ENCODE measurements at regions of chr7 and their contacts with region 1.

Region 1: GRCh38 chr7:151448261-151449252 is 8.6 kb upstream of the CRYGN start:
- DNase-seq: peak; percentile 63 to 90 (median 81)
- ATAC-seq: peak; percentile 90
- H3K4me3 ChIP-seq: peak overlapping the region; percentile 53 to 74
- H3K4me3 Mint-ChIP-seq: peak overlapping the region; percentile 86
- H3K27ac ChIP-seq: peak overlapping the region; percentile 16 to 40
- H3K27ac Mint-ChIP-seq: peak overlapping the region; percentile 85
- H3K4me1 ChIP-seq: peaks cover 3% of the 10 kb centered on the region
- H3K4me1 Mint-ChIP-seq: peaks cover 8% of the 10 kb centered on the region
- H3K27me3 ChIP-seq: no peaks in the 10 kb centered on the region
- H3K27me3 Mint-ChIP-seq: peaks cover 7% of the 10 kb centered on the region
- CTCF ChIP-seq: peak; percentile 65

Region 2: DNA sequence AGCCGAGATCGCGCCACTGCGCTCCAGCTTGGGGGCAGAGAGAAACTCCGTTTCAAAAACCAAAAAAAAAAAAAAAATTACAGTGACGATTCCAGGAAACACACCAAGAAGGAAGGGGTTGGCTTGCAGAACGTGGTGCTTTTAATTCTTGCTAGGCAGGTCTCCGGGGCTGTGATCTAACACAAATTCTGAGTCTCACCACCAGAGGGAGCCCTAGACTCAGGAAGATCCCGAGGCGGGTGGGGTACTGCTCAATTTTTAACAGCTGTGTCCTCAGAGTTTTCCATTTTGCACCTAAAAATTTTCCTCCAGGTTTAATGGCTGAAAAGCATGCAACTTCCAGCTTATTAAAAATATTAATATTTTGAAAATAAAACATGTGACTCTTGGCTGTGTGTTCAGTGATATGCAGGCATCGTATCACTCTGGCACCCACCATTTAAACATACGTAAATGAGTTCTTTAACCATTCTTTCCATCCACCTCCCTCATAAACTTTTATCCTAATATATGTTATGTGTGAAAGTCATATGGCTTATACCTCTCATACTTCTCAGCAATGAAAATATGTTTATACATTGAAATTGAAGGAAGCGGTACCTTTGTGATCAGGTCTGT is 133.4 kb before region 1 on chr7:
- CTCF ChIA-PET with region 1: interaction called, 63 read pairs
- POLR2A ChIA-PET with region 1: interaction called, 6 read pairs
- intact Hi-C with region 1: loop called (anchors 1 kb)
- DNase-seq: peak; percentile 63 to 89 (median 82)
- ATAC-seq: peak; percentile 95
- H3K4me3 ChIP-seq: no peak overlapping the region
- H3K4me3 Mint-ChIP-seq: no peak overlapping the region
- H3K27ac ChIP-seq: no peak overlapping the region
- H3K27ac Mint-ChIP-seq: no peak overlapping the region
- H3K4me1 ChIP-seq: peaks cover 4% of the 10 kb centered on the region
- H3K4me1 Mint-ChIP-seq: peaks cover 6% of the 10 kb centered on the region
- H3K27me3 ChIP-seq: peaks cover 0 to 4% of the 10 kb centered on the region in 2 experiments
- H3K27me3 Mint-ChIP-seq: no peaks in the 10 kb centered on the region
- CTCF ChIP-seq: peak; percentile 88

Region 3: DNA sequence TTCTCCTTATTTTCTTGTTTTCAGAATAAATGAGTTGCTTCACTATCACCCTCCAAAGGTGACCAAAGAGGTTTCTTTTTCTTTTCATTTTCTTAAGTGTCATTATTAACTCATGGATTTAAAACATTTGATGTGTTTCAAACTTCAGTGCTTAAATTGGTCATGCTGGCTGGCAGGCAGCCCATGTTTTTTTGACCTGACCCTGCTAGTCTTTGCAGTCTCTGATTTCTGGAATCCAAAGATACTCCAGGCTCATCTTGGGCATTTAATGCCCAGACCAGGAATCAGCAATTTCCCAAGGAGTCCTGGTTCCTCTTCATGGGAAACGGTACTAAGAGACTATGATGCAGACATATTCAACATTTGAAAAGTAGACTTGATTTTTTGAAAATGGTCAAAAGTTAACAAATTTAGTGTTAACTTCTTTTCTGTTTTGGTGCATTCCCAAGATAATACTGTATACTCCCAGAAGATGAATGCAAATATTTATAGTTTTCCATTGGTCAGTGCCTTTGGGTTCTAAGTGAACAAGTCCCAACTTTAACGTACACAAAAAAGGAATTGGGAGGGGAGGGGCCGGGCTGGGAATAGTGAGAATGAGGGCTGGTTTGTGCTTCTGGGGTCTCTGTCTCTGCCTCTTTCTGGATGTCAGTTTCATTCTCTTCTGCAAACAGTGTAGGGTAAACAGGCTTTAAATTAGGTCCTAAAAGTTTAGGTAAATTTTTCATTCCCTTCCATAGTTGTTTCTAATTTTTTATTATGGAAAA is 87.2 kb before region 1 on chr7:
- CTCF ChIA-PET with region 1: interaction called, 248 read pairs
- POLR2A ChIA-PET with region 1: interaction called, 6 read pairs
- intact Hi-C with region 1: no loop called
- DNase-seq: no peak
- ATAC-seq: no peak
- H3K4me3 ChIP-seq: no peak overlapping the region
- H3K4me3 Mint-ChIP-seq: no peak overlapping the region
- H3K27ac ChIP-seq: no peak overlapping the region
- H3K27ac Mint-ChIP-seq: no peak overlapping the region
- H3K4me1 ChIP-seq: no peaks in the 10 kb centered on the region
- H3K4me1 Mint-ChIP-seq: peaks cover 5% of the 10 kb centered on the region
- H3K27me3 ChIP-seq: no peaks in the 10 kb centered on the region
- H3K27me3 Mint-ChIP-seq: no peaks in the 10 kb centered on the region
- CTCF ChIP-seq: no peak

Region 4: GRCh38 chr7:151381348-151382078 is 67.0 kb before region 1 on chr7:
- CTCF ChIA-PET with region 1: interaction called, 26 read pairs
- POLR2A ChIA-PET with region 1: no interaction called
- intact Hi-C with region 1: loop called in 1 of 2 experiments (anchors 1 kb)
- DNase-seq: peak; percentile 15 to 86 (median 64)
- ATAC-seq: peak; percentile 85
- H3K4me3 ChIP-seq: peak overlapping the region; percentile 40 to 54
- H3K4me3 Mint-ChIP-seq: peak overlapping the region; percentile 78
- H3K27ac ChIP-seq: peak overlapping the region in 1 of 2 experiments; percentile 22
- H3K27ac Mint-ChIP-seq: peak overlapping the region; percentile 18
- H3K4me1 ChIP-seq: peaks cover 19% of the 10 kb centered on the region
- H3K4me1 Mint-ChIP-seq: peaks cover 12% of the 10 kb centered on the region
- H3K27me3 ChIP-seq: peaks cover 6 to 7% of the 10 kb centered on the region in 2 experiments
- H3K27me3 Mint-ChIP-seq: peaks cover 7% of the 10 kb centered on the region
- CTCF ChIP-seq: no peak

Region 5: DNA sequence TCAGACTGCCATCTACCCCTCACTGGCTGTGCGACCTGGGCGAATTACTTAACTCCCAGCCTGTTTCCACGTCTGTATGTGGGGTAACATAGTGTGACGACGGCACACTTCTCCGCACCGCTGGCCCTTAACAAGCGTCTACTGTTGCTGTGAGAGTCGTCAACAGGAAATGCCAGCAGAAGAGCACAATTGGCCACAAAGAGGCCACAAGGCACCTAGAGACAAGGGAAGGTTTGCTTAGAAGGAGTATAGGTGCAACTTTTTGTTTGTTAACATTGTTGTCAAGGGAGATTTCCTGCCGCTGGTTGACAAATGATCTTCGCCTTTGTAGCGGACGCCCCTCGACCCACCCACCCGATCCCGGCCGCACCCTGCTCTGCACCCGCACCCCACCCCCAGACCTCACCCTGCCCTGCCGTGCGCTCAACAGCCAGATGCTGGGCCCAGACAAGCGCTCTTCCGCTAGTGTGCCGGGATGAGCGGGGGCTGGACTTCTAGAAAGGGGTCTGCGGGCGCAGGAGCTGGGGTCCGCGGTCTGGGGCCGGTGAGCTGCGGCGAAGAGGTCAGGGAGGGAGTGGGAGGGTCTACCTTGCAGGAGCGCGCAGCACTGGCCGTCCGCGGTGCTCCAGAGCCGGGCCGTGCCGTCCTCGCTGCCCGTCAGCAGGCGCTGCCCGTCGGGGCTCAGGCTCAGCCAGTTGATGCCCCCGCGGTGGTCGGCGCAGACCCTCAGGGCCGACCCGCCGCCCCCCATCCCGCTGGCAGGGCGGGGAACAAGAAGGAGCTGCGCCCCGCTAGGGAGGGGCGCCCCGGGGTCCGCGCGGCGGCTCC is 39.5 kb before region 1 on chr7:
- CTCF ChIA-PET with region 1: interaction called, 7 read pairs
- POLR2A ChIA-PET with region 1: interaction called, 6 read pairs
- intact Hi-C with region 1: loop called (anchors 1 kb)
- DNase-seq: peak; percentile 36 to 96 (median 70)
- ATAC-seq: peak; percentile 83
- H3K4me3 ChIP-seq: peak overlapping the region; percentile 54 to 58
- H3K4me3 Mint-ChIP-seq: peak overlapping the region; percentile 76
- H3K27ac ChIP-seq: peak overlapping the region; percentile 45 to 79
- H3K27ac Mint-ChIP-seq: peak overlapping the region; percentile 91
- H3K4me1 ChIP-seq: peaks cover 23% of the 10 kb centered on the region
- H3K4me1 Mint-ChIP-seq: peaks cover 25% of the 10 kb centered on the region
- H3K27me3 ChIP-seq: peaks cover 11 to 13% of the 10 kb centered on the region in 2 experiments
- H3K27me3 Mint-ChIP-seq: peaks cover 18% of the 10 kb centered on the region
- CTCF ChIP-seq: no peak

Region 6: DNA sequence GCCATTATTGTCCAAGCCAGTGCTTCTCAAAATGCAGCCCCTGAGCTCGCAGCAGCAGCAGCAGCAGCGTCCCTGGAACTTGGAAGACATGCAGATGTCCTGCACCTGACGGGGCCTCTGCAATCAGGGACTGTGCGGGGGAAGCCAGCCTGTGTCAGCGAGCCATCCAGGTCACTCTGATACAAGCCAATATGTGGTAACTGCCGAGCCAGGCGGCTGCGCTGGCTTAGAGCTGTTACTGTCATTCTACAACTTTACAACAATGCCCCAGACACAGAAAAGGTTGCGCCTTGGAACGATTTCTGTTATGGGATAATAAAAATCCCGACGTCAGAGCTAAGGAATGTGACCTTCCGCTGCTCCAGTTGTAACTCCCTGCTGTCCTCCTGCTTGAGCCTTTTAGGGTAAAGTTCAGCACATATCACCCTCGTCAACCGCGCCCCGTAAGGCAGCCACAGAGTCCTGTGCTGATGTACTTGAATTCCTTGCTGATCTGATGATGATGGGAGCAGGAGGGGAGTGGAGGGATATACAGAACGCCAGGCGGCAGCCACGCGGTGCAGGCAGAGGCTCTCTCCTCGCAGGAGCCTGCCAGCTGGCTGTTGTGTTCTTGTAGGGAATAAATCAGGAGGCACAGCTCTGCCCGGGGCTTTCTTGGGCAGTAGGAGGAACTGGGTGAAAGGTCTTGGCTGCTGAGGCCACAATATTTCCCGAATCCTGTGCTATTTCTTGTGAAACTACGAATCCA is 11.3 kb after region 1 on chr7:
- CTCF ChIA-PET with region 1: interaction called, 24 read pairs
- POLR2A ChIA-PET with region 1: no interaction called
- intact Hi-C with region 1: no loop called
- DNase-seq: no peak
- ATAC-seq: no peak
- H3K4me3 ChIP-seq: no peak overlapping the region
- H3K4me3 Mint-ChIP-seq: no peak overlapping the region
- H3K27ac ChIP-seq: no peak overlapping the region
- H3K27ac Mint-ChIP-seq: no peak overlapping the region
- H3K4me1 ChIP-seq: no peaks in the 10 kb centered on the region
- H3K4me1 Mint-ChIP-seq: peaks cover 5% of the 10 kb centered on the region
- H3K27me3 ChIP-seq: no peaks in the 10 kb centered on the region
- H3K27me3 Mint-ChIP-seq: peaks cover 7% of the 10 kb centered on the region
- CTCF ChIP-seq: no peak